Esophagus muscularis mucosa (tissue), 4 donors: ENCODE measurements at regions of chr1 and their contacts with region 1.

Region 1: DNA sequence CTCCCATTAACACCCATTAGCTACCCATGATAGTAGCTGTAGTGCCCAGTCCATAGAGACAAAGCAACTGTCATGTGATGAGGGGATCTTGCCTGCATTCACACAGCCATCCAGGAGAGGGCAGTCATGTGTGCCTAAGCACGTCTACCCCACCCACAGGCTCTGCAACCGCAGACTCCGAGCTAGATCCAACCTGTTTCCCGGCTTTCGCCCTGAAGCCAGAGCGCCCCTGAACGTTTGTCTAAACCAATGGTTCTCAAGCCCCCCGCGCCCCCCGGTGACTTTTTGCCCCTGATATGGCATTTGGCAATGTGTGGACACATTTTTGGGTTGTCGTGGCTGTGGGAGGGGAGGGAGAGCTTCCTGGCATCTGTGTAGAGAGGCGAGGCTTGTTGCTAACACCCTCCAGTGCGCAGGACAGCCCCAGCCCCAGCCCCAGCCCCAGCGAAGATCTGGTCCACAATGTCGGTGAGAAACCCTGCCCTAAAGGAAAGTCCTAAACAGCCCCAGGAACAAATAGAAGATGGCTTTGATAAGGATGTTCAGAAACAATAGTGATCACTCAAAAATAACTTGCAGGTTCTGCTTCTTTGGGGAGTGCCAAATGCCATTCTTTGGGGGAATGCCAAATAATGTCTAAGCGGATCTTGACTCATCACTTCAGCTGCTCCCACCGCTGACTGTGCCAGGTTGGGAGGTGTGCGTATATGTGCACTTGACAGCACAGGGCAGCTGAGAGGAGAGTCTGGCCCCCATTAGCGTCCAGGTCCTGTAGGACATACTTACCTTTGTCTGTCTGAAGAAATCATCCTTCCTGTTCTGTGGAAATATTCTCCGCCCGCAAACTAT is 34.5 kb downstream of the SLC44A3 start:
- DNase-seq: peak; percentile 96
- H3K4me3 ChIP-seq: peak overlapping the region; percentile 51 to 66 (median 53)
- H3K27ac ChIP-seq: peak overlapping the region; percentile 79 to 91 (median 86)
- H3K4me1 ChIP-seq: peaks cover 12 to 32% (median 20%) of the 10 kb centered on the region in 4 donors
- H3K27me3 ChIP-seq: no peaks in the 10 kb centered on the region
- CTCF ChIP-seq: peak; percentile 94 to 96 (median 96)
- EP300 ChIP-seq: no peak
- POLR2A ChIP-seq: no peak

Region 2: GRCh38 chr1:94926915-94927404 is 72.3 kb after region 1 on chr1 and contains the start of gene CNN3:
- intact Hi-C with region 1: loop called (anchors 2 kb)
- DNase-seq: peak; percentile 96
- H3K4me3 ChIP-seq: peak within 1 kb of the TSS; percentile 71 to 93 (median 80)
- H3K27ac ChIP-seq: peak within 1 kb of the TSS; percentile 98 to 100 (median 99)
- H3K4me1 ChIP-seq: peaks cover 30 to 67% (median 65%) of the 10 kb centered on the region in 4 donors
- H3K27me3 ChIP-seq: no peaks in the 10 kb centered on the region
- CTCF ChIP-seq: no peak
- EP300 ChIP-seq: no peak
- POLR2A ChIP-seq: peak; percentile 94
- total RNA-seq, gene CNN3: 140 to 268 (median 194) TPM

Region 3: DNA sequence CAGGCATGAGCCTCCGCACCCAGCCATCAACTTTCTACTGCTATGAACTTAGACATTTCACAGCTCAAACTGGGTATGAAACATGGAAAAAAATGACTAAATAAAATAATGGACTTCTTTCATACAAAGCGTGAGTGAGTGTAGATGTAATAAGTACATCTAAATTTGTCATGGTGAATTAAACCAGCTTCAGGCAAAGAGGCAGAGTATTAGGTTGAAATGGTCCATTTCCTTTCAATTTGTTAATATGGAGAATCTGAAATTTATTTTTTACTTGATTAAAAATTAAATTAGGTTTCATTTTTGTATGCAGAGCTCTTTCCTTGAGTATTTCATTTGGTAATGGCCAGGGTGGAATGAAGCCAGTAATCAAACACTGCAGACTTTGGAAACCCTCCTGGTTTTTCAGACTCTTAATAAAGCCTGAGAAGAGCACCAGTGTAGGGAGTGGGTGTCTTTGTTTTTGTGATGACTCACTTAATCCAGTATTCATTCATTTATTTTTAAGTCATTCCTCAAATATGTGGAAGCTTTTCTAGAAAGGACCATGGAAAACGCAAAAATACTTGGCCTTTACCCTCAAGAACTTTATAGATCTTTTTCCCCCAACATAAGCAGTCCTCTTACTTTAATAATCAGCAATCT is 168.8 kb after region 1 on chr1:
- intact Hi-C with region 1: loop called (anchors 5 kb)
- DNase-seq: peak; percentile 21
- H3K4me3 ChIP-seq: no peak overlapping the region
- H3K27ac ChIP-seq: peak overlapping the region; percentile 59 to 81 (median 76)
- H3K4me1 ChIP-seq: peaks cover 16 to 45% (median 41%) of the 10 kb centered on the region in 4 donors
- H3K27me3 ChIP-seq: no peaks in the 10 kb centered on the region
- CTCF ChIP-seq: no peak
- EP300 ChIP-seq: no peak
- POLR2A ChIP-seq: no peak

Region 4: GRCh38 chr1:95043141-95043980 is 188.7 kb after region 1 on chr1:
- intact Hi-C with region 1: loop called (anchors 1 kb)
- DNase-seq: peak; percentile 97
- H3K4me3 ChIP-seq: no peak overlapping the region
- H3K27ac ChIP-seq: peak overlapping the region; percentile 71 to 82 (median 78)
- H3K4me1 ChIP-seq: peaks cover 16 to 32% (median 29%) of the 10 kb centered on the region in 4 donors
- H3K27me3 ChIP-seq: no peaks in the 10 kb centered on the region
- CTCF ChIP-seq: peak; percentile 99
- EP300 ChIP-seq: no peak
- POLR2A ChIP-seq: no peak

Region 5: DNA sequence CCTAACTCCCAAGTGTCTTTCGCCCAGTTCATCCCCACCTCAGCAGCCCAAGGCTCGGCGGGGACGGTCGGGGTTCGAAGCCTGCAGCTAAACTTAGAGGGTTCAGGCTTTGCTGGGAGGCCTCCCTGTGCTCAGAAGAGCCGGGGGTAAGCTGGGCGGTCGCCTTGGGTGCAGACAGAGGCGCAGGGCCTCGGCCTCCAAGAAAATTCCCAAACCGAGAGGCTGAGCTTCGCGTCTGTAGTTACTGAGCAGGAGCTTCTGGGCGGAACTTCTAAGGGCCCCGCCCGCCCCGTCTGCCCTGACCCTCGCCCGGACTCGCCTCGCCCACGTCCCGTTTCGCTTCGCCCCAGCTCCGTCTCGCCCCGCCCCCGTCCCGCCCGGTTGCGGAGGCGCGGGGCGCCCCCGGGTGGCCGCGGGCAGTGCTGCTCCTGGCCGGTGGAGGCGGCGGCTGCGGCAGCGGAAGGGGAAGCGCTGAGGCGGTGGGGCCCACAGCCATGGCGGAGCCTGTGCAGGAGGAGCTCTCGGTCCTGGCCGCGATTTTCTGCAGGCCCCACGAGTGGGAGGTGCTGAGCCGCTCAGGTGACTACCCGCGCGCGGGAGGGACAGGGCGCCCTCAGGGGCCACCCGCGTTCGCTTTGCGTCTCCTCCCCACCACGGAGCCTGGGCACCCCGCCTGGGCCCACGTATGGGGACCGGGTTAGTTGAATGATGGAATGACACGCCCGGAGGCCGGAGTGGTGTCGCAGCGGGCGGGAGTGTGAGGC is 379.2 kb after region 1 on chr1 and contains the start of gene RWDD3:
- intact Hi-C with region 1: loop called (anchors 10 kb)
- DNase-seq: peak; percentile 95
- H3K4me3 ChIP-seq: peak within 1 kb of the TSS; percentile 72 to 95 (median 84)
- H3K27ac ChIP-seq: peak within 1 kb of the TSS; percentile 82 to 92 (median 88)
- H3K4me1 ChIP-seq: peaks cover 27 to 58% (median 50%) of the 10 kb centered on the region in 4 donors
- H3K27me3 ChIP-seq: no peaks in the 10 kb centered on the region
- CTCF ChIP-seq: peak in 2 of 3 experiments; percentile 95
- EP300 ChIP-seq: no peak
- POLR2A ChIP-seq: peak; percentile 3
- total RNA-seq, gene RWDD3: 8.8 to 15.2 (median 11.6) TPM